Adrenal gland (tissue), 19 donors: ENCODE measurements at regions of chr11 and their contacts with region 1.

Region 1: DNA sequence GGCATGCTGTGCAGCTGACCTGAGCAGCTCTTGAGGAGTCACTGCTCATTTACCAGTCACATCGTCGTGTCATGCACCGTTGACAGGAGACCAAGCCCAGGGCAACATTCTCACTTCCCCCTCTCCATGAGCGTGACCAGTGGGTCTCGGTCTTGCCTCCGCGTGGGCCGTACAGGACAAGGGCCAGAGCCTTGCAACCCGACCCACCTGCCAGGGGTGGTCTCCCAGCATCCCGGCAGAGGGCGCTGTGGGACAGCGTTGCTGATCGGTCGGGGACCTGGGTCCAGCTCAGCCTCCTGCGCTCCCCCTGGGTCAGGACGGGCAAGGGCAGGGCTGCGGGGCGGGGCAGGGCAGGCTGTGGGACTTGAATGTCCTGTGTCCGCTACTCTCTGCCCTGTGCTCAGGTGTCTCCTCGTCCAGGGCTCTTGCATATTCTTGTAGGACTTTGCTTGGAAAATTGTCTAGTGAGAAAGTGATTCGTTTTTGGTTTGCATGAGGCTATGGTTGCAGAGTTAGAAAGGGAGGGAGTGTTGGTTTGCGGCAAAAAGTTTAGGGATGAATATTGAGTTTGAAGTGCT is 16.2 kb downstream of the EIF4G2 start:
- DNase-seq: peak; percentile 82 to 91 (median 89)
- H3K4me3 ChIP-seq: no peak overlapping the region
- H3K27ac ChIP-seq: no peak overlapping the region
- H3K4me1 ChIP-seq: peaks cover 0 to 3% of the 10 kb centered on the region in 2 donors
- H3K27me3 ChIP-seq: no peaks in the 10 kb centered on the region
- CTCF ChIP-seq: peak; percentile 80 to 93 (median 86)
- POLR2A ChIP-seq: no peak

Region 2: DNA sequence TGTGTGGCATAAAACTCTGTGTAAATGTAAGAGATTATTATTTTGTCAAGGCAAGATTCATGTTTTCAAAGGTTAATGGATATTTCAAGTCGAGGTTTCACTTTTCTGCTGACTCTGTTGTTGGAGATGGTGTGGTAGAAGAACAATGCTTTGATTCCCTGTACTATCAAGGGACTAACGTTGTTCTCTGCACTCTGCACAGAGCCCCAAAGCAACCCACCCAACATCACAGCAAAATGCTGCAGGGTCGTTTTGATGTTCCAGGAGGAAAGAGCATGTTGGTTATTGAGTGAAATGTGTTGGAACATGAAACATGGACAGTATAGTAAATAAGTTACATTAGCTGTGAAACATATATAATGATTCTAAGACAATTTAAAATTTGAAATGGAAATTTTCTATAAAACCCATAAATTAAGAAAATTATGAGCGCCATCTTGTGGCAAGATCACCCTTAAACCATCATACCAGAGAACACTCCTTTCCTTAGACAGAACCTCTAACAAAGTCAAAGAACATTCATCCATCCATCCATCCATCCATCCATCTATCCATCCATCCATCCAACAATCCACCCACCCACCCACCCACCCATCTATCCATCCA is 229.7 kb after region 1 on chr11:
- intact Hi-C with region 1: loop called (anchors 5 to 10 kb)
- DNase-seq: peak in 1 of 7 donors; percentile 31
- H3K4me3 ChIP-seq: no peak overlapping the region
- H3K27ac ChIP-seq: no peak overlapping the region
- H3K4me1 ChIP-seq: no peaks in the 10 kb centered on the region
- H3K27me3 ChIP-seq: no peaks in the 10 kb centered on the region
- CTCF ChIP-seq: peak; percentile 29 to 57 (median 50)
- POLR2A ChIP-seq: no peak

Region 3: GRCh38 chr11:11028017-11028692 is 235.7 kb after region 1 on chr11:
- intact Hi-C with region 1: loop called (anchors 5 to 10 kb)
- DNase-seq: peak; percentile 54 to 84 (median 71)
- H3K4me3 ChIP-seq: no peak overlapping the region
- H3K27ac ChIP-seq: no peak overlapping the region
- H3K4me1 ChIP-seq: no peaks in the 10 kb centered on the region
- H3K27me3 ChIP-seq: no peaks in the 10 kb centered on the region
- CTCF ChIP-seq: peak; percentile 61 to 74 (median 70)
- POLR2A ChIP-seq: no peak